Panc1 (cell line): ENCODE measurements at regions of chr3 and their contacts with region 1.

Region 1: GRCh38 chr3:173465113-173465512 is 67.6 kb downstream of the NLGN1 start:
- DNase-seq: no peak
- ATAC-seq: no peak
- H3K4me3 ChIP-seq: no peak overlapping the region
- H3K27ac ChIP-seq: no peak overlapping the region
- H3K4me1 ChIP-seq: no peaks in the 10 kb centered on the region
- H3K27me3 ChIP-seq: no peaks in the 10 kb centered on the region
- CTCF ChIP-seq: no peak

Region 2: DNA sequence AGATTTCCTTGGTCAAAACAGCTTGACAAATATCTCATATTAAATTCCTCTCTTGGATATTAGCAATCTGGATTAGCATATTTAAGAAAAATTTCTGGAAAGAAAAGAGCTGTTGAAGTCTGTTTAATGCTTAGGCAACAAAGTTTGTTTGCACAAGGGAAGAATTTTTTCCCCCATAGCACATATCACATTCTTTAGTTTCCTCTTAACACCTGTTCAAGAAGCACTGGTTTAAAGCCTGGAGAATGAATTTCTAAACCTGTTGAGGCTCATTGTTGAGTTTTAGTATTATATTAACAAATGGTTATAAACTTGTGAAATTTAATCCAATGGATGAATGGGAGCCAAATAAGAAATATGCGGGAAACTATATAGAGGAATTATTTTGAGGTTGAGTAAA is 26.1 kb before region 1 on chr3:
- CTCF ChIA-PET with region 1: no interaction called
- POLR2A ChIA-PET with region 1: interaction called, 13 read pairs
- in situ Hi-C with region 1: no loop called
- intact Hi-C with region 1: no loop called
- DNase-seq: no peak
- ATAC-seq: no peak
- H3K4me3 ChIP-seq: no peak overlapping the region
- H3K27ac ChIP-seq: no peak overlapping the region
- H3K4me1 ChIP-seq: no peaks in the 10 kb centered on the region
- H3K27me3 ChIP-seq: no peaks in the 10 kb centered on the region
- CTCF ChIP-seq: no peak